PC-9 (cell line): ENCODE measurements at regions of chr16 and their contacts with region 1.

Region 1: GRCh38 chr16:20383106-20384029 is 21.2 kb downstream of the PDILT start:
- DNase-seq: peak; percentile 44 to 58
- H3K4me3 ChIP-seq: no peak overlapping the region
- H3K27ac ChIP-seq: no peak overlapping the region
- H3K4me1 ChIP-seq: no peaks in the 10 kb centered on the region
- H3K27me3 ChIP-seq: no peaks in the 10 kb centered on the region; the same call in 1 of the 2 replicates
- CTCF ChIP-seq: peak; percentile 83

Region 2: DNA sequence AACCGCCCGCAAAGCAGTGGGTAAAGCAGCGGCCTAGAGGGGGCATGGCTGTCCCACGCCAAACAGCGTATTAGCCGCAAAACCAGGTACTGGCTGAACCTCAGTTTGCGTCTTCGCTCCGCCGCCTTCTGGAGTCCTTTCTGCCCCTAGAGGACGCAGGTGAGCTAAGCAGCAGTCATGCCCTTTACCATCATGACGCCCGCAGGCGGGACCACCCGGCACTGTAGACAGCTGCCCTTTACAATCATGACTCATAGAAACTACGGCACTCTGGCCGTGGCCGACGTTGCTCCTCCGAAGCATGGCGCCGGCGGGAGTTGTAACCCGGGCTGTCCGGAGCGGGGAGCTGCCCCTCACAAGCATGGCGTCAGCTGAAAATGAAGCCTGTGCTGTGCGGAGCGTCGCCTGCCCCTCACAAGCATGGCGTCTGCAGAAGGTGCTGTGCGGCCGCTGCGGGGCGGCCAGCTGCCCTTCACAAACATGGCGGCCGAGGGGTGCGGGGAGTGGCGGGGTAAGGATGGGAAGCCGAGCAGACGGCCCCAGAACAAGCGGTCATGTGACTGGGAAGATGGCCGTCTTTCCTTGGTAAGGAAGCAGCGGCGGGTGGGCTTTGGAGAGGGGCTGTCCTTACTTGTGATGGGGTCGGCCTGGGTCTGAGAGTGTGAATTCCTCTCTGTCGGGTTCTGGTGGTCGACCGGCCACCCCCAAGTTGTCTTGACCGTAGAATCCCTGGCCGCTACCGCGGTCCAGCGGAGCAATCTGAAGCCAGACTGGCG is 828.0 kb before region 1 on chr16 and contains the start of gene VPS35L:
- CTCF ChIA-PET with region 1: no interaction called
- POLR2A ChIA-PET with region 1: no interaction called
- intact Hi-C with region 1: loop called (anchors 2 kb)
- DNase-seq: peak; percentile 73 to 92
- H3K4me3 ChIP-seq: peak within 1 kb of the TSS; percentile 61
- H3K27ac ChIP-seq: no peak within 1 kb of the TSS
- H3K4me1 ChIP-seq: no peaks in the 10 kb centered on the region; the same call in 1 of the 2 replicates
- H3K27me3 ChIP-seq: no peaks in the 10 kb centered on the region
- CTCF ChIP-seq: peak; percentile 62
- total RNA-seq, gene VPS35L: 11.7 and 12.1 TPM in 2 replicates

Region 3: DNA sequence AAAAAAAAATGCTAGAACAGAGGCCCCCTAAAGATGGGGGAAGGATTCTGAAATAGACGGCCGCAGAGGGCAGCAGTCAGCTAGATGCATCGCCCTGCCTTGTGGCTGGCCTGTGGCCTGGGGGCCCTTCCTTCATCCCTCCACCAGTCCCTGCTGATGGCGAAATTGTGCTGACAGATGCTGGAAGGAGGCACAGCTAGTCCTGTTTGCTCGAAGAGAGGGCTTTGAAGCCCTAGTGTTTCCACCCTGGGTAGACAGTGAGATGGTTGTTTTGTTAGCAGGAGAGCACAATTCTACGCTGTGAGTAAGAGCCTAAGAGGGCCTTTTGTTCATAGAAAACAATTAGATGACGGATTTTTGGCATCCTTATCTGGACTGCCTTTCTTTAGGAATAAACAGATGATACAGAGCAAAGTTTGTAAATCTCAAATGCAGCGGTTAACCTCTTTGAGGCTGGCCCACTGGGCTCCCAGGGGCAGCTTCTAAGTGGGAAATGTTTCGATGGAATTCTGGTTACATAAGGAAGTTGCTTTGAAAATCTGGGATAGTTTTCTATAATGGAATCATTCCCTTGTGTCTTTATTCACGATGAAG is 804.9 kb before region 1 on chr16:
- CTCF ChIA-PET with region 1: interaction called, 3 read pairs
- POLR2A ChIA-PET with region 1: interaction called, 15 read pairs
- intact Hi-C with region 1: no loop called
- DNase-seq: no peak
- H3K4me3 ChIP-seq: no peak overlapping the region
- H3K27ac ChIP-seq: no peak overlapping the region
- H3K4me1 ChIP-seq: no peaks in the 10 kb centered on the region
- H3K27me3 ChIP-seq: no peaks in the 10 kb centered on the region
- CTCF ChIP-seq: no peak

Region 4: GRCh38 chr16:19898924-19899604 is 484.3 kb before region 1 on chr16:
- CTCF ChIA-PET with region 1: no interaction called
- POLR2A ChIA-PET with region 1: no interaction called
- intact Hi-C with region 1: loop called (anchors 1 kb)
- DNase-seq: peak; percentile 50 to 61
- H3K4me3 ChIP-seq: no peak overlapping the region
- H3K27ac ChIP-seq: no peak overlapping the region
- H3K4me1 ChIP-seq: no peaks in the 10 kb centered on the region
- H3K27me3 ChIP-seq: peaks cover 27% of the 10 kb centered on the region
- CTCF ChIP-seq: peak; percentile 85

Region 5: GRCh38 chr16:19907161-19907992 is 476.0 kb before region 1 on chr16:
- CTCF ChIA-PET with region 1: interaction called, 7 read pairs
- POLR2A ChIA-PET with region 1: no interaction called
- intact Hi-C with region 1: loop called (anchors 1 kb)
- DNase-seq: peak; percentile 49 to 73
- H3K4me3 ChIP-seq: no peak overlapping the region
- H3K27ac ChIP-seq: no peak overlapping the region
- H3K4me1 ChIP-seq: no peaks in the 10 kb centered on the region
- H3K27me3 ChIP-seq: peaks cover 34% of the 10 kb centered on the region
- CTCF ChIP-seq: peak; percentile 95

Region 6: DNA sequence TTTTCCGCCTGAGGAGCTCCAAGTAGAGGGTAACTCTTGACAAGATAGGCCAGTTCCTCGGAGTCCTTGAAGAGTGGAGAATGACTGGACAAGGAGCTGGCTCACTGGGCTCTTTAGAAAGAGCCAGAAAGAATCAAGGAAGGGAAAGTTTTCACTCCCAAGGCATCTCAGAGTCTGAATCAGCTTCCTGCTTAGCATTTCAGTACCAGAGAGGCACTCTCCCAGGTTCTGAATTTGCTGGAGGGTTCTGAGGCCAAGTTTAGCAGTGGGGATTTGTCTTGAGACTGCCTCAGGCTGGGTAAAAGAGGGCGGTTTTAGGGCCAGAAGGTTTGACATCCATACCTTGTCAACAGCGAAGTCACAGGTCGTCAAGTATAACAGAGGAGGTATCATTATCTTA is 81.5 kb before region 1 on chr16:
- CTCF ChIA-PET with region 1: no interaction called
- POLR2A ChIA-PET with region 1: no interaction called
- intact Hi-C with region 1: no loop called
- DNase-seq: no peak
- H3K4me3 ChIP-seq: no peak overlapping the region
- H3K27ac ChIP-seq: no peak overlapping the region
- H3K4me1 ChIP-seq: no peaks in the 10 kb centered on the region
- H3K27me3 ChIP-seq: peaks cover 5% of the 10 kb centered on the region; the same call in 1 of the 2 replicates
- CTCF ChIP-seq: no peak

Region 7: DNA sequence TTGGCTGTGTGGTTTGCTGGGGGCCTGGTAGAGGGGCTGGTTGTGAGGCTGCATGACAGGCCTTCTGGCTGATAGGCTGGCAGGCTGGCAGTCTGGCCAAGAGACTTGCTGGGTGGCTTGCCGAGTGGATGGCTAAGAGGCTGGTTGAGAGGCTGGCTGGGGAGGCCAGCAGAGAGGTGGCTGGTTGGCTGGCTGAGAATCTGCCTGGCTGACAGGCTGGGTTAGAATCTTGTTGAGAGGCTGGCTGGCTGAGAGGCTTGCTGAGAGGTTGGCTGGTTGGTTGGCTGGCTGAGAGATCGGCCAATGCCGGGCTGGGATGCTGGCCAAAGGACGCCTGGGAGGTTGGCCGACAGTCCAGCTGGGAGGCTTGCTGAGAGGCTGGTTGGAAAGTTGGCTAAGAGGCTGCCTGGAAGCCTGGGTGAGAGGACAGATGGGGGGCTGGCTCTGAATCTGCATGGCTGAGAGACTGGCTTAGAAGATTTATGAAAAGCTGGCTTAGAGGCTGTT is 228.7 kb after region 1 on chr16:
- CTCF ChIA-PET with region 1: no interaction called
- POLR2A ChIA-PET with region 1: no interaction called
- intact Hi-C with region 1: no loop called
- DNase-seq: no peak
- H3K4me3 ChIP-seq: no peak overlapping the region
- H3K27ac ChIP-seq: no peak overlapping the region
- H3K4me1 ChIP-seq: no peaks in the 10 kb centered on the region
- H3K27me3 ChIP-seq: peaks cover 50% of the 10 kb centered on the region
- CTCF ChIP-seq: no peak

Region 8: DNA sequence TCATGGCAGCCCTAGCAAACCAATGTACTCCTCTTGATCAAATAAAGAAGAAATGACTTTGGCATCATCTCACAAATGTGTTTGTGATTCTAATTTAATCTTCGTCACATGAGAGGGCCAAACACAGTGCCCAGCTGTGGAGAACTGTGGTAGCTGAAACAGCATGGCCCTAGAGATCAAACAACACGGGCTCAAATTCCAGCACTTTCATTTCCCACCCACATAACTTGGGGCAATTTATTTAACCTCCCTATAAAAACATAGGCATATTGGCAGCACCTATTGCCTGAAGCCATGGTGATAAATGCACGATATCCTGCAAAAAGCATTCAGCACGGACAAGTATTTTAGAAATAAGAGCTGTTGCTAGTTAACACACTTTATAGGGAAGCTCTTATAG is 311.7 kb after region 1 on chr16:
- CTCF ChIA-PET with region 1: interaction called, 13 read pairs
- POLR2A ChIA-PET with region 1: no interaction called
- intact Hi-C with region 1: loop called (anchors 10 kb)
- DNase-seq: no peak
- H3K4me3 ChIP-seq: no peak overlapping the region
- H3K27ac ChIP-seq: no peak overlapping the region
- H3K4me1 ChIP-seq: no peaks in the 10 kb centered on the region
- H3K27me3 ChIP-seq: peaks cover 60% of the 10 kb centered on the region
- CTCF ChIP-seq: no peak

Region 9: DNA sequence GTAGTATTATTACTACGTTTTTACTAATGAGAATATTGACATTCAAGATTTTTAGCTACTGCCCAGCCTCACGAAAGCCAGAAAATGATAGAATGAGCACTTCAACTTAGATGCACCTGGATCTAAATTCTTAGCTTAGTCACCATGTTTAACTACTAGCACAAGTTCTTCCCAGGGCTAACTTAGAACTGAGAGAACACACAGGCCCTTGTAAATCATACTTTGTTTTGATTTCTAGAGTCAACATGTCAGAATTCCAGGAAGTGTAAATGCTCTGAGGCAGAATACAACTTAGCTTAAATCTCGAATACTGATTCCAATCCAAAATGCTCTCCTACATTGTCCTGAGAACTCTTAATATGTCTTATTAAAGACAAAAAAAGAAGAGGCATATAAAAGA is 320.9 kb after region 1 on chr16:
- CTCF ChIA-PET with region 1: no interaction called
- POLR2A ChIA-PET with region 1: no interaction called
- intact Hi-C with region 1: loop called (anchors 10 kb)
- DNase-seq: no peak
- H3K4me3 ChIP-seq: no peak overlapping the region
- H3K27ac ChIP-seq: no peak overlapping the region
- H3K4me1 ChIP-seq: no peaks in the 10 kb centered on the region
- H3K27me3 ChIP-seq: peaks cover 33% of the 10 kb centered on the region
- CTCF ChIP-seq: no peak